Pancreas (tissue), 10 donors: ENCODE measurements at regions of chr14 and their contacts with region 1.

Region 1: GRCh38 chr14:23114669-23115491 is 4.2 kb downstream of the CEBPE start:
- DNase-seq: no peak
- ATAC-seq: peak in 2 of 4 donors; percentile 32 to 58
- H3K4me3 ChIP-seq: no peak overlapping the region
- H3K27ac ChIP-seq: no peak overlapping the region
- H3K4me1 ChIP-seq: no peaks in the 10 kb centered on the region
- H3K27me3 ChIP-seq: no peaks in the 10 kb centered on the region
- CTCF ChIP-seq: no peak

Region 2: GRCh38 chr14:23068476-23069412 is 46.1 kb before region 1 on chr14:
- intact Hi-C with region 1: loop called in 1 of 3 experiments (anchors 5 kb)
- DNase-seq: peak in 4 of 6 donors; percentile 75 to 90 (median 78)
- ATAC-seq: peak; percentile 72 to 87 (median 81)
- H3K4me3 ChIP-seq: no peak overlapping the region
- H3K27ac ChIP-seq: no peak overlapping the region
- H3K4me1 ChIP-seq: peaks cover 16 to 23% (median 19%) of the 10 kb centered on the region in 3 donors
- H3K27me3 ChIP-seq: no peaks in the 10 kb centered on the region
- CTCF ChIP-seq: peak; percentile 94 to 98 (median 96)

Region 3: GRCh38 chr14:23186913-23187654 is 72.2 kb after region 1 on chr14:
- intact Hi-C with region 1: loop called (anchors 2 to 10 kb)
- DNase-seq: peak in 2 of 6 donors; percentile 38 to 68
- ATAC-seq: peak in 3 of 4 donors; percentile 65 to 81 (median 66)
- H3K4me3 ChIP-seq: no peak overlapping the region
- H3K27ac ChIP-seq: no peak overlapping the region
- H3K4me1 ChIP-seq: no peaks in the 10 kb centered on the region
- H3K27me3 ChIP-seq: no peaks in the 10 kb centered on the region
- CTCF ChIP-seq: peak; percentile 39 to 76 (median 56)